ENCODE measurements at regions of chr17 and their contacts with region 1.

Region 1: GRCh38 chr17:36601303-36602029 is at the start of gene MRM1:
- DNase-seq: peak; percentile 93
- ATAC-seq: peak; percentile 86
- H3K4me3 Mint-ChIP-seq: peak within 1 kb of the TSS; percentile 89
- H3K27ac Mint-ChIP-seq: peak within 1 kb of the TSS; percentile 92
- H3K4me1 Mint-ChIP-seq: peaks cover 33% of the 10 kb centered on the region
- H3K27me3 Mint-ChIP-seq: no peaks in the 10 kb centered on the region
- total RNA-seq, gene MRM1: 14.3 to 16.4 TPM

Region 2: GRCh38 chr17:36486204-36487194 is 115.0 kb before region 1 on chr17 and contains the start of gene ZNHIT3:
- CTCF ChIA-PET with region 1: no interaction called
- POLR2A ChIA-PET with region 1: no interaction called
- intact Hi-C with region 1: loop called in 1 of 2 experiments (anchors 1 kb)
- DNase-seq: peak; percentile 95
- ATAC-seq: peak; percentile 94
- H3K4me3 Mint-ChIP-seq: peak within 1 kb of the TSS; percentile 84
- H3K27ac Mint-ChIP-seq: peak within 1 kb of the TSS; percentile 96
- H3K4me1 Mint-ChIP-seq: peaks cover 50% of the 10 kb centered on the region
- H3K27me3 Mint-ChIP-seq: peaks cover 10% of the 10 kb centered on the region
- total RNA-seq, gene ZNHIT3: 38.2 to 42.3 TPM

Region 3: DNA sequence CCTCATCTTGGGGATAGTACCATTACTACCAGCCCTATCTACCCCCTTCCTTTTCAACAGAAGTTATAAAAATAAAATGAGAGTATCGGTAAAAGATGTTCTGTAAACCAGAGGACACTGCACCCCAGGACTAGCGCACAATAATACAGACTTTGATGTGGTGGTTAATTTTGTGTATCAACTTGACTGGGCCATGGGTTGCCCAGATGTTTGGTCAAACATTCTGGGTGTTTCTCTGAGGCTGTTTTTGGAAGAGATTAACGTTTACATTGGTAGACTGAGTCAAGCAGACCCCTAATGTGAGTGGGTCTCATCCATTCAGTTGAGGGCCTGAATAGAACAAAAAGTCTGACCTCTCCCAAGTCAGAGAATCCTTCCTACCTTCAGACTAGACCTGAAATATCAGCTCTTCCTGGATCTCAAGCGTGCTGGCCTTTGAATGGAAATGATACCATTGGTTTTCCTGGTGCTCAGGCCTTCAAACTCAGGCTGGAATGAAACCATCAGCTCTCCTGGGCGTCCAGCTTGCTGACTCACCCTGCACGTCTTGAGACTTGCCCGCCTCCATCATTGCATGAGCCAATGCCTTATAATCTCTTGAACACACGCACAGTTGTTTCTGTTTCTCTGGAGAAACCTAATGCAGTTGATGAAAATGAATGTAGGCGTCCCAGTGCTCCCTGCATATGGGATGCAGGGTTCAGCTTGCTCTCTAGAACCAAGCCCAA is 10.0 kb after region 1 on chr17:
- CTCF ChIA-PET with region 1: interaction called, 16 read pairs
- POLR2A ChIA-PET with region 1: no interaction called
- intact Hi-C with region 1: no loop called
- DNase-seq: no peak
- ATAC-seq: no peak
- H3K4me3 Mint-ChIP-seq: no peak overlapping the region
- H3K27ac Mint-ChIP-seq: no peak overlapping the region
- H3K4me1 Mint-ChIP-seq: peaks cover 9% of the 10 kb centered on the region
- H3K27me3 Mint-ChIP-seq: no peaks in the 10 kb centered on the region

Region 4: DNA sequence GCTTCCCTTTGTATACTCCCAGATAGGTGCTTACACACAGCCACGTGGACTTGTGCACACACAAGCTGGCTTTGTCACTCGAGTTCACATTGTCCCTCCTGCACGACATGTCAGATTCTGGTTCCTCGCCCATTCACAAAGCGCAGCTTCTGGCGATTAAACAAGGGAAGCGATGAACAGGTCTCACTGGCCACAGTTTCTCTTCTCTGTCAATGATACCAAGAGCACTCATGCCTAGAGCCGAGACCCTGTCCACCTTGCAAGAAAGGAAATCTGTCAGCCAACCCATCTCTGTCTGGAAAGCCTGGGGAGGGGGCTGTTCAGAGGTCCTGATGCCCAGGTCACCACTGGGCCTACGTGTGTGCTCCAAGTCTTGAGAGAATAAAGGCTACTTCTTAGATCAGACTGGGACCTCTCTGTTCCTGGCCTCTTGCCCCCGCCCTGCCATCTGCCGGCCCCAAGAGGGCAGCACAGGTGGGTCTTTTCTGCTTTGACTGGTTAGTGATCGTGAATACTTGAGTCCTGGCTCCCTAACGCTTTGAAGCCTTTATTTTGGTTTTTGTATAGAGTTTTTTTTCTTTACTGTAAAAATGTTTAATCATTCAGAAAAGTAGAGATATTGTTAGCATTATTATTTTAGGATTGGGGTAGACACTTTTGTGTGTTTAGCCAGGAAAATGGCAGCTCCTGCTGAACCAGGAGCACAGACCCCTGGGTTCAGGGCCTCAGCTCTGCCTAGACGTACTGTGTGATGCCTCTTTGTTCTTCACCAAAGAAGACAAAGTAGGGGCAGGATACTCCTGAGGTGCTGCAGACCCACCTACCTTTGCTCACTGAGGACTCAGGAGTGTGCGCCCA is 104.6 kb after region 1 on chr17:
- CTCF ChIA-PET with region 1: no interaction called
- POLR2A ChIA-PET with region 1: no interaction called
- intact Hi-C with region 1: loop called in 1 of 2 experiments (anchors 1 kb)
- DNase-seq: peak; percentile 78
- ATAC-seq: peak; percentile 92
- H3K4me3 Mint-ChIP-seq: no peak overlapping the region
- H3K27ac Mint-ChIP-seq: no peak overlapping the region
- H3K4me1 Mint-ChIP-seq: no peaks in the 10 kb centered on the region
- H3K27me3 Mint-ChIP-seq: peaks cover 26% of the 10 kb centered on the region

Region 5: DNA sequence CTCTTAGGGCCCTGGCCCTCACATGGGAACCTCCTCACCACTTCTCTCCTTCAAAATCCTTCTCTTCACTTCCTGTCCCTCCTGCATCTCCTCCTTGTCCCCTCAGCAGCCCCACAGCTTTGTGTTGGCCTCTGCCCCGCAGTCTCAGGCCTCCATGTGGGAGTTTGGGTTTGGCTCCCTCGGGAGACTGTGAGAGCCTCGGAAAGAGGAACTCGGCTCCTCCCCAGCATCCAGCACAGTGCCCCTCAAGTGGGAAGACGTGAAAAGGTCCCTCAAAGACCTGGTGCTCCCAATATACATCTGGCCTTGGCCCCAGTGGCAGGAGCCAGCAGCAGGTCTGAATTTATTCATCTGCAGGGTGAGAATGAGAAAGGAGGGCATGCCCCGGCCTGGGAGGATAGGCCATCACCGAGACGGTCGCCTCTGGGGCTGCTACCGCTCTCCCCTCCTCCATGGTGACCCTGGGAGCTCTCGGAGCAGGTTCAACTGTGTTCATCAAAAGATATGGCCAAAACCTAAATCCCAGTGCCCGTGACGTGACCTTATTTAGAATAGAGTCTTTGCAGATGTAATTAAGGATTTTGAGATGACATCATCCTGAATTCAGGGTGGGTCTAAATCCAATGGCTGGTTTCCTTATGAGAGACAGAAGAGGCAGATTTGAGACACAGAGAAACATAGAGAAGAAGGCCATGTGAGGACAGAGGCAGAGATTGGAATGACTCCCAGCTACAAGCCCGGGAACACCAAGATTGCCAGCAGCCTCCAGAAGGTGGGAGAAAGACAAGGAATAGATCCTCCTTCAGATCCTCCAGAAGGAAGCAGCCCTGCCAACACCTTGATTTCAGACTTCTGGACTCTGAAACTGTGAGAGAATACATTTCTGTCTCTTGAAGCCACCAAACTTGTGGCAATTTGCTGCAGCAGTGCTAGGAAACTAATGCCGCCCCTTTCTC is 135.0 kb after region 1 on chr17:
- CTCF ChIA-PET with region 1: no interaction called
- POLR2A ChIA-PET with region 1: no interaction called
- intact Hi-C with region 1: no loop called
- DNase-seq: no peak
- ATAC-seq: no peak
- H3K4me3 Mint-ChIP-seq: no peak overlapping the region
- H3K27ac Mint-ChIP-seq: no peak overlapping the region
- H3K4me1 Mint-ChIP-seq: no peaks in the 10 kb centered on the region
- H3K27me3 Mint-ChIP-seq: peaks cover 4% of the 10 kb centered on the region

Region 6: GRCh38 chr17:36921095-36921851 is 319.8 kb after region 1 on chr17:
- CTCF ChIA-PET with region 1: no interaction called
- POLR2A ChIA-PET with region 1: no interaction called
- intact Hi-C with region 1: loop called in 1 of 2 experiments (anchors 1 kb)
- DNase-seq: peak; percentile 85
- ATAC-seq: peak; percentile 93
- H3K4me3 Mint-ChIP-seq: peak overlapping the region; percentile 24
- H3K27ac Mint-ChIP-seq: peak overlapping the region; percentile 85
- H3K4me1 Mint-ChIP-seq: peaks cover 20% of the 10 kb centered on the region
- H3K27me3 Mint-ChIP-seq: peaks cover 42% of the 10 kb centered on the region

Region 7: GRCh38 chr17:37047631-37048104 is 446.2 kb after region 1 on chr17:
- CTCF ChIA-PET with region 1: interaction called, 32 read pairs
- POLR2A ChIA-PET with region 1: no interaction called
- intact Hi-C with region 1: loop called in 1 of 2 experiments (anchors 1 kb)
- DNase-seq: peak; percentile 92
- ATAC-seq: peak; percentile 91
- H3K4me3 Mint-ChIP-seq: no peak overlapping the region
- H3K27ac Mint-ChIP-seq: no peak overlapping the region
- H3K4me1 Mint-ChIP-seq: peaks cover 12% of the 10 kb centered on the region
- H3K27me3 Mint-ChIP-seq: no peaks in the 10 kb centered on the region

Region 8: DNA sequence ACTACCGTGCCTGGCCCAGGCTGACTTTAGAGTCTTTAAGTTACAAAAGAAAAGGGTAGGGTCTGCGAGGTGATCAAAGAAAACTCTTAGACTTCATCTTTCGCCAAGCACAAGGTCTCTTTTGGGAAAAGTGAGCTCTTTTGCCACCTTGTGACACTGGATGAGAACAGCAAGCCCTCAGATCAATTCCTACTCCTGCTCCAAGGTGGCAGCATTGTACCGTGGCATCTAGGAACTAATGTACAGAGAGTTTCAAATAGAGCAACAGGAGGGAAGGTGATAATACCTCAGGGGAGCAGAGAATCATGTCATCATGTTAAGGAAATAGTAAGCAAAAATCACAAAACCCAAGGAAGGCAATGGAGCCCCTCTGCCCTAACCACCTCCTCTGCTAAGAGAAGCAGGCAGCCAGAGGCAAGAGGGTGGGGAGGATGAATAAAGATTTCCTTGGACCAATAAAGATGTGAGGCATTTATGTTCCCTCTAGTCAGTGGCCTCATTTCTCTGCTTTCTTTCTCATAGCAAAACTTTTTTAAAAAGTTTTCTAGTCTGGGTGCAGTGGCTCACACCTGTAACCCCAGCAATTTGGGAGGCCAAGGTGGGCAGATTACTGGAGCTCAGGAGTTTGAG is 772.2 kb after region 1 on chr17:
- CTCF ChIA-PET with region 1: interaction called, 8 read pairs
- POLR2A ChIA-PET with region 1: no interaction called
- intact Hi-C with region 1: loop called in 1 of 2 experiments (anchors 1 kb)
- DNase-seq: peak; percentile 82
- ATAC-seq: peak; percentile 98
- H3K4me3 Mint-ChIP-seq: no peak overlapping the region
- H3K27ac Mint-ChIP-seq: no peak overlapping the region
- H3K4me1 Mint-ChIP-seq: peaks cover 5% of the 10 kb centered on the region
- H3K27me3 Mint-ChIP-seq: no peaks in the 10 kb centered on the region